AG04450 (cell line): ENCODE measurements at regions of chr11 and their contacts with region 1.

Region 1: DNA sequence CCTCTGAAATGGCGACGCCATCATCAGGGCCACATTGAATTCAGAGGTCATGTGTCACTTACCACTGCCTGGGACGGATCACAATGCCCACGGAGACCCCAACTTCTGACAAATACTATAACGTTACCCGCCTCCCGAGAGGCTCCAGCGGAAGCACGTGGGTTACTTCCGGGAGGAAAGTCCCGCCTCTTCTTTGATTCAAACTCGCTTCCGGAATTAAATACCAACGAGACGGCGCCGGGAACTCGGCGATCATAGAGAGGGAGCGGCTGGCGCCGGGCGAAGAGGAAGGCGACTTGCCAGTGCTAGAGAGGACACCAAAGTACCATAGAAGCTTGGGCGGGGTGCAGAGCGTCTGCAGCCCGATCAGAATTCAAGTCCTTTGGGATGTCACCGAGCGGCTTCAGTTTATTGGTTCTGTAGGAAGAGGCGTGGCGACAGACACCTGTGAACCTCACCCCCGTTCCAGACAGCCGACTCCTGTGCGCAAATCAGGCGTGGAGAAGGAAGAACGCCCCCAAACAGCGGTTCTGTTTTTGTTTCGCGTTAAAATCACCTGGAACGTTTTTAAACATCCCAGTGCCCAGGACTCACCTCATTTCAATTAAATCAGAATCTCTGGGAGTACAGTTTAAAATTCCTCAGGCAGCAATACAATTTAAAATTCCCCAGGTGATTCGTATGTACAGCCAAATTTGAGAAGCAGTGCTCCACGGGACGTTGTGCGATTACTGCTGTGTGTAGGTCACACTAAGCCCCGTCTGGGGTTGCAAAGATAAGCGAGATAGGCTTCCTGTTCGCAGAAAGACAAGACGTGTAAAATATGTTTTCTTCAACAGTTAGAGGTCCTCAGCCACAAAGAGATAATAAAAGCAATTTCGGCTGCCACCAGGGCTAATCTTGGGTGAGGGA is at the start of gene TIMM10:
- DNase-seq: peak; percentile 86
- H3K4me3 ChIP-seq: peak within 1 kb of the TSS; percentile 99
- H3K27ac ChIP-seq: no peak within 1 kb of the TSS
- H3K27me3 ChIP-seq: peaks cover 5% of the 10 kb centered on the region
- CTCF ChIP-seq: no peak
- polyA plus RNA-seq, gene TIMM10: 76.6 and 82.8 TPM in 2 replicates

Region 2: GRCh38 chr11:57345555-57346211 is 185.2 kb before region 1 on chr11:
- CTCF ChIA-PET with region 1: interaction called, 41 read pairs
- POLR2A ChIA-PET with region 1: no interaction called
- DNase-seq: no peak
- H3K4me3 ChIP-seq: no peak overlapping the region
- H3K27ac ChIP-seq: no peak overlapping the region
- H3K27me3 ChIP-seq: peaks cover 7% of the 10 kb centered on the region
- CTCF ChIP-seq: peak; percentile 65

Region 3: GRCh38 chr11:57358543-57358961 is 172.3 kb before region 1 on chr11:
- CTCF ChIA-PET with region 1: no interaction called
- POLR2A ChIA-PET with region 1: no interaction called
- DNase-seq: no peak
- H3K4me3 ChIP-seq: no peak overlapping the region
- H3K27ac ChIP-seq: no peak overlapping the region
- H3K27me3 ChIP-seq: peaks cover 37% of the 10 kb centered on the region
- CTCF ChIP-seq: no peak

Region 4: GRCh38 chr11:57480409-57481137 is 50.3 kb before region 1 on chr11:
- CTCF ChIA-PET with region 1: interaction called, 49 read pairs
- POLR2A ChIA-PET with region 1: no interaction called
- DNase-seq: no peak
- H3K4me3 ChIP-seq: no peak overlapping the region
- H3K27ac ChIP-seq: no peak overlapping the region
- H3K27me3 ChIP-seq: peaks cover 38% of the 10 kb centered on the region
- CTCF ChIP-seq: peak; percentile 75

Region 5: GRCh38 chr11:57493507-57494503 is 37.0 kb before region 1 on chr11:
- CTCF ChIA-PET with region 1: interaction called, 121 read pairs
- POLR2A ChIA-PET with region 1: interaction called, 5 read pairs
- DNase-seq: no peak
- H3K4me3 ChIP-seq: no peak overlapping the region
- H3K27ac ChIP-seq: peak overlapping the region; percentile 31
- H3K27me3 ChIP-seq: no peaks in the 10 kb centered on the region
- CTCF ChIP-seq: peak; percentile 87

Region 6: GRCh38 chr11:57508341-57509170 is 22.3 kb before region 1 on chr11:
- CTCF ChIA-PET with region 1: interaction called, 25 read pairs
- POLR2A ChIA-PET with region 1: no interaction called
- DNase-seq: no peak
- H3K4me3 ChIP-seq: no peak overlapping the region
- H3K27ac ChIP-seq: no peak overlapping the region
- H3K27me3 ChIP-seq: no peaks in the 10 kb centered on the region
- CTCF ChIP-seq: no peak